ENCODE measurements at regions of chr19 and their contacts with region 1.

Region 1: GRCh38 chr19:40425450-40426287 is at the start of gene SERTAD1:
- DNase-seq: peak; percentile 100
- H3K4me3 Mint-ChIP-seq: peak within 1 kb of the TSS; percentile 93
- H3K27ac Mint-ChIP-seq: peak within 1 kb of the TSS; percentile 99
- H3K4me1 Mint-ChIP-seq: peaks cover 7% of the 10 kb centered on the region
- H3K27me3 Mint-ChIP-seq: peaks cover 2% of the 10 kb centered on the region
- total RNA-seq, gene SERTAD1: 18.3 and 19.4 TPM in 2 replicates

Region 2: DNA sequence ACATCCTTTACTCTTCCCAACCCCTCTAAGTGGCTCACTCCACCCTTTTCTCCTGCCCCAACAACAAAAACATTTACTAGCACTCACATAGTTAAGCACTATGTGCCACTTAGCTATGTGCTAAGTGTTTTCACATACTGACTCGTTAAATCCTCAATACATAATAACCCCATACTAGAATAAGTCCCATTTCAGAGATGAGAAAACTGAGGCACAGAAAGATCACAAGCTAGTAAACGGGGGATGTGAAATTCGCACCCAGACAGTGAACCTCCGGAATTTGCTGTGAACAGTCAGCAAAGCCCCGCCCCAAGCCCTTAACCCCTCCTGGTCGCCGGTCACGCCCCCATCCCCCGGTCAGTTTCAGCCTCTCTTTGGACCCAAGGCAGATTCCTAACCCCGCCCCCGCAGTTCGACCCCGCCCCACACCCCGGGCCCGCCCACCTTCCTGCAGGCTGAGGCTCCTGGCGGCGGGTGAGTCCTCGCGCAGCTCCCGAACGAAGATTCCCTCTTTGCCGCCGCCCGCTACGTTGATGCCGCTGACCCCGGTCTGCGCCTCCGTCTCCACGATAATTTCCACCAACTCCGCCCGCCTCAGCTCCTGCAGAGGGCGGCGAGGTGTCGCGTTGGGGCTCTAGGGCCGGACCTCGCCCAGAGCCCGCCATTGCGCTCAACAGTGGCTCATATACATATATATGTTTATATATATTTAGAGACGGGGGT is 22.2 kb before region 1 on chr19:
- intact Hi-C with region 1: loop called (anchors 1 kb)
- DNase-seq: peak; percentile 80
- H3K4me3 Mint-ChIP-seq: peak overlapping the region; percentile 83
- H3K27ac Mint-ChIP-seq: peak overlapping the region; percentile 72
- H3K4me1 Mint-ChIP-seq: peaks cover 21% of the 10 kb centered on the region
- H3K27me3 Mint-ChIP-seq: peaks cover 7% of the 10 kb centered on the region

Measured in activated T-helper 1 cell treated with anti-CD3 and anti-CD28 coated beads, Interleukin-12 subunit alpha, Interleukin-12 subunit beta, Interleukin-2, Interleukin-4 antibody, amounts not matched to agents 30 ng/mL and 10 ng/mL and 1 ng/mL, durations not matched to agents 14 hours and 24 hours and 36 hours (primary cell).